MCF 10A (cell line): ENCODE measurements at regions of chr20 and their contacts with region 1.

Region 1: DNA sequence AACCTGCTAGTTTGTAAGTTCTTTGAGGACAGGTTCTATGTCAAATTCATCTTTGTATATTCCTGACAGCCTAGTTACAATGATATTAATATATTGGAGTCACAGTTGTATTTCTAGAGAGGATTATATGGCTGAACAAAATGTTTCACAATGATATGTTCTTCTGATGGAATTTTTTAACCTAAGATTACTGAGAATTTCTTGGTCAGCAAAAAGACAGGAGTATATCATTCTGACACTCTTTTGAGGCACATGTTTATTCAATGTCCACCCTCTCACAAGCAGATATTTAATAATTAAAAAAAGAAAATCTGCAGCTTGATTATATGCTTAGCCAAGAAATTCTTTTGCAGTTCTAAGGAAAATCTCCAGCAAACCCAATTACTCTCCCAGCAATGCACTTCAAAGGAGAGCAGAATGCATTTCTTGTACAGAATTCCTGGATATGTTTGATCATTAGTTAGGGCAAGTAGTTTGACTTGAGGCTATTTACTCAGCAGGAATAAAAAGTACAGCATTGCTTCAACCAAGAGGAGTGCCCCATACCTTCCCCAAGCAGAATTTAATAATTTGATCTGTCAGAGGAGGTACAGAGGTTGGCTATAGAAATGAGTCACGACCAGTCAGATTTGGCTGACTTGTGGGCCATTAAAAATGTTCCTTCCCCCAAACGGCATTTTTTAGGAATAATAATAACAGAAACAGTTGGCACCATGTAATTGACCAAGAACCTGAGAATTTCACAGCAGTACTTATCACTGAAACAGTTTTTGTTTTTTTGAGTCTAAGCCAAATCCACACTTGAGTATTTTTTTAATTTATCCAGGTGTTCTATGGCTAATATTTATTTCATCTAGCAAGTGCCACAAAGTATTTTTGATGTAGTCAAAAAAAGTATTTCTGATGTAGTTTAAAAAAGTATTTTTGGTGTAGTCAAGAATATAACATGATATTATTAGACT is 508.1 kb upstream of the FLRT3 start:
- DNase-seq: peak; percentile 76
- H3K4me3 Mint-ChIP-seq: peak overlapping the region; percentile 1
- H3K27ac Mint-ChIP-seq: peak overlapping the region; percentile 82
- H3K4me1 Mint-ChIP-seq: peaks cover 13% of the 10 kb centered on the region
- H3K27me3 Mint-ChIP-seq: no peaks in the 10 kb centered on the region
- CTCF ChIP-seq: no peak

Region 2: DNA sequence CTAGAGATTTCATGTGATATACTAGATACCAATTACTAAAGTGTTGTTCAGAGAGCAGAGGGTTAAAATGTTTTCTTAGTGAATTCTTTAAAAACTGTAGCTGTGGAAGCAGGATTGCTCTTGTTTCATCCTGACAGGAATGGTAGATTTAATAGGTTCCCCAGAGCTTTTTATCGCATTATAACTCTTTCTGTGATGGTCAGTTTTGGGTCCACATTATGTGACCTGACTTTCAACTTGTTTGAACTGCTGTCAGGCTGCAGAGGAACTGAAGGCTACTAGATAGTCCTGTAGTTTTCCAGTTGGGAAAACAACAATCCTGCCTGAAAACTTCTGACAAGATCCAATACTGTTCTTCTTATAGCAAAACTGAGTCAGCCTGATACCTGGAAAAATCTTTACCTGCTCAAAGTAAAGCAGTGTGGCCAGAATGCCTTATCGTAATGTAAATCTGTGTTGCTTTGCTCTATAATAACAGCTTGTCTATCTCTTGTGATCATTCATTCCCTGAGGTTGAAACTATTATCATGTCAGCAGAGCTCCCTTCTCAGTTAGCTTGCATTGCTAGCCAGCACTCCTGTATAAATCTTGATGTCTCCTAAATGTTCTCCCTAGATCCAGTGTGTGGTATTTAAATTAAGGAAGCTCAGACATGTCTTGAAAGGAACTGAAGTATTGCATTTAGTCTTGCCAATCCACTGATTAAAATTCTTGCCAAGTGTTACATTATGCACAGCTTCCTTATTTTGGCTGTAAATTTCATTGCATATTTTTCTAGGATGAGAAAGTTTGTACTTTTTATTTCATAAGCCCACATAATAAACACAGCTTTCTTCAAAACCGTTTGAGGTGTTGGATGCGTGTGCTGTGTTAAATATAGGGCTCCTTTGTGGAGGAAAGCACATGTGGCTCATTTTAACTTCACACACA is 178.5 kb before region 1 on chr20:
- CTCF ChIA-PET with region 1: no interaction called
- POLR2A ChIA-PET with region 1: no interaction called
- intact Hi-C with region 1: no loop called
- DNase-seq: no peak
- H3K4me3 Mint-ChIP-seq: no peak overlapping the region
- H3K27ac Mint-ChIP-seq: no peak overlapping the region
- H3K4me1 Mint-ChIP-seq: no peaks in the 10 kb centered on the region
- H3K27me3 Mint-ChIP-seq: no peaks in the 10 kb centered on the region
- CTCF ChIP-seq: no peak

Region 3: DNA sequence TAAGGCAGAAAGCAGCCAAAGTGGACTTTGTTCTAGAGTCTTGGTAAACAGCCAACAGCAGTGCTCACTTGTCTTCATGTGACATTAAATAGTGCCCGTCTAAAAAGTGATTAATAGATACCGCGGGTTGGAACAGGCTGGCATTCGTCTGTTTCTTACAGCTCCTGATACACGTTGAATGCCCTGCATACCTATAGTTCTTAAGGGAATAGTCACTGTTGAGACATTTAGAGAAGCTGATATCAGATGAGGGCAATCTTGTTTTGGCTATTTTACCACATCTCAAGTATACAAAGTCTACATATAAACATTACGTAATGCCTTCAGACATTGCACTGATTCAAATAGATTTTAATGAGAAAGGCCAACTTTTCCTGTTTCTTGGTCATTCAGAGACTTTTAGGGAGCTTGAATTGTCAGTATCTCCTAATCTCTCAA is 133.2 kb before region 1 on chr20:
- CTCF ChIA-PET with region 1: interaction called, 4 read pairs
- POLR2A ChIA-PET with region 1: interaction called, 13 read pairs
- intact Hi-C with region 1: no loop called
- DNase-seq: peak; percentile 35
- H3K4me3 Mint-ChIP-seq: no peak overlapping the region
- H3K27ac Mint-ChIP-seq: peak overlapping the region; percentile 86
- H3K4me1 Mint-ChIP-seq: peaks cover 26% of the 10 kb centered on the region
- H3K27me3 Mint-ChIP-seq: no peaks in the 10 kb centered on the region
- CTCF ChIP-seq: no peak

Region 4: GRCh38 chr20:14832630-14833029 is 12.8 kb before region 1 on chr20:
- CTCF ChIA-PET with region 1: no interaction called
- POLR2A ChIA-PET with region 1: interaction called, 10 read pairs
- intact Hi-C with region 1: no loop called
- DNase-seq: no peak
- H3K4me3 Mint-ChIP-seq: no peak overlapping the region
- H3K27ac Mint-ChIP-seq: no peak overlapping the region
- H3K4me1 Mint-ChIP-seq: no peaks in the 10 kb centered on the region
- H3K27me3 Mint-ChIP-seq: no peaks in the 10 kb centered on the region
- CTCF ChIP-seq: no peak

Region 5: GRCh38 chr20:14865169-14865568 is 19.7 kb after region 1 on chr20:
- CTCF ChIA-PET with region 1: no interaction called
- POLR2A ChIA-PET with region 1: interaction called, 12 read pairs
- intact Hi-C with region 1: no loop called
- DNase-seq: peak; percentile 72
- H3K4me3 Mint-ChIP-seq: no peak overlapping the region
- H3K27ac Mint-ChIP-seq: peak overlapping the region; percentile 42
- H3K4me1 Mint-ChIP-seq: peaks cover 13% of the 10 kb centered on the region
- H3K27me3 Mint-ChIP-seq: no peaks in the 10 kb centered on the region
- CTCF ChIP-seq: no peak